ENCODE measurements at regions of chr1 and their contacts with region 1.

Region 1: DNA sequence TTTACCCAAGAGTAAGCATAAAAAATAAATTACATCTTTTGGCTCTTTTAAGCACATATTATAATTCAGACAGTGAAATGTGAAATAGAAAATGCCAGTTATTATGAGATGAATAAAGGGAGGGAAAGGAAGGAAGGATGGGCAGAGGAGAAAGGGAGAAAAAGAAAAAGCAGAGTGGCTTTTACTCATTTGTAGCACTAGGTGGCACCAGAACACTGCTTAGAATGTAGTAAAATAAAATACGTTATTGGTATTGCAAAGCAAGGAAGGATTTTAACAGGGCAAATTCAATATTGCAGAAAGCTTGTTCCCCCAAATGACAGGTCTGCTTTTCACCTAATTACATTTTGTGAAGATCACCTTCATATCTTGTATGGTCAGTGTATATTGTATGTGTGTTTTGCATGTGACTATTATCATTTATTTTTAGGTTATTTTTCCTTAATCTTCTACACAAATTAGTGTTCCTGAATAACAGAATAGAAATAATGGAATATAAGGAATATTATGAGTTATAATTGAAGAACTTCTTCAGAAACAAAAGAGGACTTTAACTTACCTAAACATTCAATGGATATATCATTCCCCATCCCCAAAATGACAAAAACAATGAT is 9.1 kb upstream of the PCNX2 start:
- DNase-seq: peak in 2 of 5 donors; percentile 9 to 17
- H3K4me3 ChIP-seq: no peak overlapping the region
- H3K4me3 Mint-ChIP-seq: no peak overlapping the region
- H3K27ac ChIP-seq: no peak overlapping the region
- H3K27ac Mint-ChIP-seq: no peak overlapping the region
- H3K4me1 ChIP-seq: no peaks in the 10 kb centered on the region
- H3K4me1 Mint-ChIP-seq: no peaks in the 10 kb centered on the region
- H3K27me3 ChIP-seq: no peaks in the 10 kb centered on the region
- H3K27me3 Mint-ChIP-seq: peaks cover 5 to 23% of the 10 kb centered on the region in 2 donors

Region 2: GRCh38 chr1:233229288-233229687 is 75.3 kb before region 1 on chr1:
- CTCF ChIA-PET with region 1: no interaction called
- POLR2A ChIA-PET with region 1: no interaction called
- DNase-seq: no peak
- H3K4me3 ChIP-seq: no peak overlapping the region
- H3K4me3 Mint-ChIP-seq: no peak overlapping the region
- H3K27ac ChIP-seq: no peak overlapping the region
- H3K27ac Mint-ChIP-seq: no peak overlapping the region
- H3K4me1 ChIP-seq: no peaks in the 10 kb centered on the region
- H3K4me1 Mint-ChIP-seq: peaks cover 0 to 1% (median 0%) of the 10 kb centered on the region in 3 donors
- H3K27me3 ChIP-seq: no peaks in the 10 kb centered on the region
- H3K27me3 Mint-ChIP-seq: no peaks in the 10 kb centered on the region

Region 3: GRCh38 chr1:233326811-233327650 is 22.4 kb after region 1 on chr1:
- CTCF ChIA-PET with region 1: no interaction called
- POLR2A ChIA-PET with region 1: no interaction called
- DNase-seq: peak; percentile 72 to 93 (median 82)
- H3K4me3 ChIP-seq: no peak overlapping the region
- H3K4me3 Mint-ChIP-seq: peak overlapping the region; percentile 76 to 91 (median 86)
- H3K27ac ChIP-seq: no peak overlapping the region
- H3K27ac Mint-ChIP-seq: peak overlapping the region; percentile 41 to 95 (median 61)
- H3K4me1 ChIP-seq: peaks cover 7% of the 10 kb centered on the region
- H3K4me1 Mint-ChIP-seq: peaks cover 8 to 17% (median 13%) of the 10 kb centered on the region in 3 donors
- H3K27me3 ChIP-seq: no peaks in the 10 kb centered on the region
- H3K27me3 Mint-ChIP-seq: peaks cover 2 to 5% of the 10 kb centered on the region in 2 donors

Region 4: GRCh38 chr1:234065794-234066447 is 761.3 kb after region 1 on chr1:
- CTCF ChIA-PET with region 1: interaction called, 19 read pairs
- POLR2A ChIA-PET with region 1: no interaction called
- DNase-seq: peak; percentile 23 to 66 (median 57)
- H3K4me3 ChIP-seq: no peak overlapping the region
- H3K4me3 Mint-ChIP-seq: no peak overlapping the region
- H3K27ac ChIP-seq: no peak overlapping the region
- H3K27ac Mint-ChIP-seq: no peak overlapping the region
- H3K4me1 ChIP-seq: no peaks in the 10 kb centered on the region
- H3K4me1 Mint-ChIP-seq: peaks cover 0 to 4% (median 3%) of the 10 kb centered on the region in 3 donors
- H3K27me3 ChIP-seq: no peaks in the 10 kb centered on the region
- H3K27me3 Mint-ChIP-seq: peaks cover 7 to 30% of the 10 kb centered on the region in 2 donors